Activated naive CD4-positive, alpha-beta T cell treated with anti-CD3 and anti-CD28 coated beads for 36 hours (primary cell): ENCODE measurements at regions of chr12 and their contacts with region 1.

Region 1: DNA sequence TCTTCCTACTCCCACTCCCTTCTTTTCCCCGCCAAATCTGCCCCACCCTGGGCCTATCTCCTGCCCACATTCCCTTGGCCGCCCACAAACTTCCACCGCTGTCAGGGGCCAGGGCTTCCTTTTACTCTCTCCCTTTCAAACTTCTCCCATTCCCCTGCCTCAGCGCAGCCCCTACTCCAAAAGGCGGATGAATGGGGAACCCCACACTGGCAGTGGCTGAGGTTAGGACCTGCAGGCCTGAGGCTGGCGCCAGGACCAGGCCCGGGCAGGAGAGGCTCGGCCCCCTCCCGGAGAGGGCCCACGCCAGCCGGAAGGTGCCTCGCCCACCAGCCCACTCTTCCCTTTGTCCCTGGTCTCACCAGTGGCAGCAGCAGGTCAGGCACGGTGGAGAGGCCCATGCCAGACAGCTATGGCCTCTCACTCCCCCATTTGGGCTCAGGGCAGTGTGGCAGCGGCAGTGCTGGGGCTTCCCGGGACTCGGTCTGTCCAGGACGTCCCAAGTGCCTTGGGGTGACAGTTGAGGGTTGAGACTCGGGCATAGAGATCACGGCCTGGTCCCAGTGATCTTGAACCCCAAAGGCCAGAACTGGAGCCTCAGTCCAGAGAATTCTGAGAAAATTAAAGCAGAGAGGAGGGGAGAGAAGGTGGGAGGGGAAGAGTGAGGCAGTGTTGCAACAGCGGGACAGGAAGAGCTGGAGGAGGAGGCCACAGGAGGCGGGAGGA is at the start of gene TNFRSF1A:
- DNase-seq: peak; percentile 73
- H3K4me3 Mint-ChIP-seq: peak within 1 kb of the TSS; percentile 17
- H3K27ac Mint-ChIP-seq: no peak within 1 kb of the TSS
- H3K4me1 Mint-ChIP-seq: peaks cover 38% of the 10 kb centered on the region
- H3K27me3 Mint-ChIP-seq: no peaks in the 10 kb centered on the region
- total RNA-seq, gene TNFRSF1A: 38.1 to 41.3 TPM

Region 2: GRCh38 chr12:6230321-6231110 is 111.1 kb before region 1 on chr12:
- CTCF ChIA-PET with region 1: no interaction called
- intact Hi-C with region 1: no loop called
- DNase-seq: peak; percentile 74
- H3K4me3 Mint-ChIP-seq: peak overlapping the region; percentile 11
- H3K27ac Mint-ChIP-seq: peak overlapping the region; percentile 79
- H3K4me1 Mint-ChIP-seq: peaks cover 16% of the 10 kb centered on the region
- H3K27me3 Mint-ChIP-seq: no peaks in the 10 kb centered on the region

Region 3: GRCh38 chr12:6267139-6267721 is 74.3 kb before region 1 on chr12:
- CTCF ChIA-PET with region 1: no interaction called
- intact Hi-C with region 1: no loop called
- DNase-seq: peak; percentile 55
- H3K4me3 Mint-ChIP-seq: no peak overlapping the region
- H3K27ac Mint-ChIP-seq: no peak overlapping the region
- H3K4me1 Mint-ChIP-seq: peaks cover 6% of the 10 kb centered on the region
- H3K27me3 Mint-ChIP-seq: no peaks in the 10 kb centered on the region

Region 4: GRCh38 chr12:6367065-6367968 is 25.7 kb after region 1 on chr12:
- CTCF ChIA-PET with region 1: interaction called, 22 read pairs
- intact Hi-C with region 1: loop called (anchors 1 kb)
- DNase-seq: peak; percentile 62
- H3K4me3 Mint-ChIP-seq: no peak overlapping the region
- H3K27ac Mint-ChIP-seq: no peak overlapping the region
- H3K4me1 Mint-ChIP-seq: peaks cover 29% of the 10 kb centered on the region
- H3K27me3 Mint-ChIP-seq: no peaks in the 10 kb centered on the region